ENCODE measurements at regions of chr11 and their contacts with region 1.

Region 1: GRCh38 chr11:44775366-44775984 is 48.7 kb downstream of the TSPAN18 start:
- H3K4me3 ChIP-seq: no peak overlapping the region
- H3K27ac ChIP-seq: no peak overlapping the region
- H3K4me1 ChIP-seq: no peaks in the 10 kb centered on the region
- CTCF ChIP-seq: peak; percentile 61; the same call in 1 of the 2 replicates

Region 2: DNA sequence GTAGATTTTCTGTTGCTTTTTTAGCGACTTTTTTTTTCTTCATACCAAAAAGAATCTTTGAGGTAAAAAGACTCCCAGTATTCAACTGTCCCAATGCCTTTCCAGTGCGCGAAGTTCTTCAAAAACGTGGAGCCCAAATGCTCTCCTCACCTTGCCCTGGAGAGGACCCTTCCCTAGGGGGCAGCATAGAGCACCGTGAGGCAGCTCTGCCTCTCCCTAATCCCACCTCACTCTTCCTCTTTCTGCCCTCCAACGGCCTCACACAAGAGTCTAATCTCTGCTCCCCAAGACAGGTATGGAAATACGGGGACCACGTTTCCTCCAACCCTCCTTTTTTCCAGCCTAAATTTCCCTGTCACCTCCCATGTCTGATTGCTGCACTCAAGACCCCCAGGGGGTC is 348.0 kb before region 1 on chr11:
- CTCF ChIA-PET with region 1: no interaction called
- POLR2A ChIA-PET with region 1: no interaction called
- H3K4me3 ChIP-seq: no peak overlapping the region
- H3K27ac ChIP-seq: no peak overlapping the region
- H3K4me1 ChIP-seq: no peaks in the 10 kb centered on the region
- CTCF ChIP-seq: no peak

Region 3: GRCh38 chr11:44737245-44738085 is 38.0 kb before region 1 on chr11:
- CTCF ChIA-PET with region 1: interaction called, 14 read pairs
- POLR2A ChIA-PET with region 1: no interaction called
- H3K4me3 ChIP-seq: no peak overlapping the region
- H3K27ac ChIP-seq: no peak overlapping the region
- H3K4me1 ChIP-seq: no peaks in the 10 kb centered on the region
- CTCF ChIP-seq: no peak

Region 4: DNA sequence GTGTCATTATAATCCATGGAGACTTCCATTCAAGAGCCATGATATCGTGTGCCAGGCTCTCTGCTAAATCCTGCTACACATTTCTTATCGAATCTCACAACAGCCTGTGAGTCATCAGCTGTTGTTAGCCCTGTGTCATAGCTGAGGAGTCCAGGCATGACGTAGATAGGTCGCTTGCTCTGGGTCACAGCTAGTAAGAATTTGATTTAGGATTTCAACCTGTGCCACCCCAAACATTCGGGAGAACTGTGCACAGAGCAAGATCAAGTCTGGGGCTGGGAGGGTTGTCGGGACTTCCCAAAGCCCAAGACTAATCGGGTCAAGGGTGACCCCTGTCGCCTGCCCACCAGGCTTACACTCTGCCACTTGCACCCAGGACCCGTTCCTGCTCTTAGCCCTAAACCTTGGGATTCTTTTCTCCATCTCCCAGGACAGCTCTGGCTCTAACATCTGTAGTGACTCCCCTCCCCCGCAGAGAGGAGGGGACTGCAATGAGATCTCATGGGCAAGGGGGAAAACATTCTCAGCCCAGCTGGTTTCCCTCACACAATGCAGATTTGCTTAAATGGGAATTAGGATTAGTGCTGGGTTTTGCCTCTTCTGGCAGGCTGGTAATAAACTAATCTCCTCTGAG is 14.4 kb before region 1 on chr11:
- CTCF ChIA-PET with region 1: interaction called, 33 read pairs
- POLR2A ChIA-PET with region 1: no interaction called
- H3K4me3 ChIP-seq: no peak overlapping the region
- H3K27ac ChIP-seq: no peak overlapping the region
- H3K4me1 ChIP-seq: peaks cover 4% of the 10 kb centered on the region; the same call in 1 of the 2 replicates
- CTCF ChIP-seq: no peak

Region 5: DNA sequence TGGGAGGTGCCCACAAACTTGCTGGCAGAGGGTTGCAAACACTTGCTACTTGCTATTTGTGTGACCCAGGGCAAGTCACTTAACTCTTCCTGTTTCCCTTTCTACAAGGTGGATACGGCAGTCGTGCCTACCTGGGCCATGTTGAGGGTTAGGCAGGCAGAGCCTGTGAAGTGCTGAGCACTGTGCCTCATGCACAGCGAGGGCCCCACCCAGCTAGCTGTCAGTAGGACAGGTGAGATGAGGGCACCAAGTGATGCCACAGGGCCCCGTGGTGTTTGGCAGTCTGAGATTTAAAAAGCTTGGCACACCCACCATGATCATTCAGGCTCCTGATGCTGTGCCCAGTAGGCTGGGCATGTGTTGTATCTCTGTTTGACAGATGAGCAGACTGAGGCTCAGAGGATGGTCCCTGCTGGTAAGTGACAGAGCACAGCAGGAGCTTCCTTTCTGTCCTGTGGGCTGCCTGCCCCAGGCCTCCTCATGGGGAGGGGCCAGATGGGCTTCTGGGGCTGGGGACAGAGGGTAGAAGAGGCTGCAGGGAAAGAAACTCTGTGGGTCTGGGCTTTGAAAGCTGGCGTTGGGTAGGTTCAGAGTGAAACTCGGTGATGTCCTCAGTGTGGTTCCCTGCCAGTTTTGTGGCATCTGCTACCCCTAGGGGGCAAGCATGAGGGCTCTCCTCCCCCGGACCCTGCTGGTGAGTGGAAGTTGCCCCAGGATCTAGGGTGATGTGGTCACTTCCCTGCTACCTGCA is 10.6 kb after region 1 on chr11:
- CTCF ChIA-PET with region 1: interaction called, 23 read pairs
- POLR2A ChIA-PET with region 1: no interaction called
- H3K4me3 ChIP-seq: no peak overlapping the region
- H3K27ac ChIP-seq: no peak overlapping the region
- H3K4me1 ChIP-seq: no peaks in the 10 kb centered on the region
- CTCF ChIP-seq: 0 out of 2 replicates have a peak, but pooled peaks have one; percentile 19

Region 6: DNA sequence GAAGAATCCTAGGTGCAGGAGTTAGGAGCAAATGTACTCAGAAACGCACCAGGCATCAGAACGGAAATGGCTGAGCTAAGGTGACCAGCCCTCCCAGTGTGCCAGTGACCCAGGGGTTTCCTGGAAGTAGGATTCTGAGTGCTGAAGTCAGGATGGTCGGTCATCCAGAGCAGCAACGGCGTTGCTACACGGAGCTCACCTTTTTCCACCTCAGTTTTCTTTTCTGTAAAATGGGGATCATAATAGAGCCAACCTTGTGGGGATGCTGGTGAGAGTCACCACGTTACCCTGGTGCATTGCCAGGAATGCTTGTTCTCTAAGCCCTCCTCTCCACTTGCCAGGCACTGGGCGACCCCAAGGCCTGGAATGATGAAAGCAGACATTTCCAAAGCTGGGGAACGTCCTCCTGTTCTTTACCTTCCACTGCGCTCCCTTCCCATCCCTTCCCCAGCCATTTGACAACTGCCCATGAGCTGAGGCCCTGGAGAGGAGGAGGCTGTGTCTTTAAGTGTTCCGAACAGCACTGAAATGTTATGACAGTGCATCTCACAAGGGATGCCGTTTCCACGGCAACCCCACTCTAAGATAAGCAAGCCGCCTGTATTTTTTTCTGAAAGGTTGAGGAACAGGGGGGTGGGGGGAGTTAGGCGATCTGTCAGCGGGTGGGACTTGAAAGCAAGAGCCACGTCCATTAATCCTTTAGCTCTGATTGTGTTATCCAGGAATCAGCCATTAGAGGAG is 18.0 kb after region 1 on chr11:
- CTCF ChIA-PET with region 1: interaction called, 23 read pairs
- POLR2A ChIA-PET with region 1: no interaction called
- H3K4me3 ChIP-seq: no peak overlapping the region
- H3K27ac ChIP-seq: no peak overlapping the region
- H3K4me1 ChIP-seq: no peaks in the 10 kb centered on the region
- CTCF ChIP-seq: no peak

Region 7: DNA sequence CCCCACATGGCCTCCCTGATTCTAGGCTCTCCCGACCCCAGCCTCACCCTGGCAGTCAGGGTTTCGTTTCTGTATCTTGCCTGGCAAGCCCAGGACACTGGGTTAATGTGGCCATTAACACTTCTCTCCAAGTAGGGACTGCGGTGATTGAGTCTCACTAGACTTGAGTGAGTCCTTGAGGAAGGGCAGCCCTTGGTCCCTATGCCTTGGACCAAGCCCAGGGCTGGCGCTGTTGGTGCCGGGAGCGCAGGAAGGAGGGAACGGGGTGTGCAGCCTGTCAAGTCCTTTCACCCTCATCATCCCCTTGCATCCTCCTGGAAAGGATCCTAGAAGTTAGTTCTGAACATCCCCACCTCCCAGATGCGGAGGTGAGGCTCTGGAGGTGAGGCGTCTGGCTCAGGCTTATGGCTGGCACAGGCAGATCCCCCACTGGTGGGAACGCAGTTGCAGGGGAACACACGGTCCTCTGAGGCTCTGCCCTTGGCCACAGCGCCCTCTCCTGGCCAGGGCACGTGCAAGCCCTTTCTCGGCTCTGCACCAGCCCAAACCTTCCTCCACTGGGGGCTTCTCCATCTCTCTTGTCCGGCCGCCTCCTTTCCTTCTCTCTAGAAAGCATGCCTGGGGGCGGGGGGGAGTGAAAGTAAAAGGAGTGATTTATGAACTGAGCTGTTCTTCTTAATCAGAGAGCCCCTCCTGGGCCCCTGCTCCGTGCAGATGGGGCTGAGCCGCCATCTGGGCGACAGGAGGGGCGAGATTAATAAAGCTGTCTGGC is 118.6 kb after region 1 on chr11:
- CTCF ChIA-PET with region 1: interaction called, 16 read pairs
- POLR2A ChIA-PET with region 1: no interaction called
- H3K4me3 ChIP-seq: no peak overlapping the region
- H3K27ac ChIP-seq: no peak overlapping the region
- H3K4me1 ChIP-seq: no peaks in the 10 kb centered on the region
- CTCF ChIP-seq: peak; percentile 76

Measured in HEK293 (cell line).